Aorta (tissue), 5 donors: ENCODE measurements at regions of chrX and their contacts with region 1.

Region 1: DNA sequence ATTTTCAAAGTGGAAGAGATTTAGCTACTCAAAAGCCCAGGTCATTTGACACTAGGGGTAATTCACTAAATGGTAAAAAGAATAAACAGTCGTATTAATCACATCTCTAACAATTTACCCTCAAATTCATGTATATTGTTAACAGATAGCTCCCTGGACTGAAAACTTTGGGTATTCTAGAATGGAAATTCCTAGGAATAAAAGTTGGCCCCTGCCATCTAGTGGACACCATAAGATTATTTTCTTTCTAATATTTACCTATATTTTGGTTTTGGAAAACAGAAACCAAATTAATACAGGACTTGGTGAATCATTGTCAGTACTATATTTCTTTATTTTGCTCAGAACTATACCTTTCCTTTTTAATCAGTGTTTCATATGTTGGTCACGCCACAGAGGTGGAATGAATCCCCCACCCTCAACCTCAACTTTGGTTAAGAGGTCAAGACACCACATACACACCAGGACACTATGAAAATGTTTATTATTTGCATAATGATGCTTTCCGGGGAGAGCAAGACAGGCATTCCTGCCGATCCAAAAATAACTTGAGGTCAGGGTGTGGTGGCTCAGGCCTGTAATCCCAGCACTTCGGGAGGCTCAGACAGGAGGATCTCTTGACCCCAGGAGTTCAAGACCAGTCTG is 96.2 kb upstream of the APOOL start:
- DNase-seq: no peak
- ATAC-seq: no peak
- H3K4me3 ChIP-seq: no peak overlapping the region
- H3K27ac ChIP-seq: no peak overlapping the region
- H3K4me1 ChIP-seq: no peaks in the 10 kb centered on the region
- H3K27me3 ChIP-seq: no peaks in the 10 kb centered on the region

Region 2: GRCh38 chrX:84729809-84730208 is 177.6 kb before region 1 on chrX:
- intact Hi-C with region 1: loop called (anchors 5 kb)
- DNase-seq: no peak
- ATAC-seq: peak; percentile 84
- H3K4me3 ChIP-seq: no peak overlapping the region
- H3K27ac ChIP-seq: no peak overlapping the region
- H3K4me1 ChIP-seq: no peaks in the 10 kb centered on the region
- H3K27me3 ChIP-seq: no peaks in the 10 kb centered on the region

Region 3: DNA sequence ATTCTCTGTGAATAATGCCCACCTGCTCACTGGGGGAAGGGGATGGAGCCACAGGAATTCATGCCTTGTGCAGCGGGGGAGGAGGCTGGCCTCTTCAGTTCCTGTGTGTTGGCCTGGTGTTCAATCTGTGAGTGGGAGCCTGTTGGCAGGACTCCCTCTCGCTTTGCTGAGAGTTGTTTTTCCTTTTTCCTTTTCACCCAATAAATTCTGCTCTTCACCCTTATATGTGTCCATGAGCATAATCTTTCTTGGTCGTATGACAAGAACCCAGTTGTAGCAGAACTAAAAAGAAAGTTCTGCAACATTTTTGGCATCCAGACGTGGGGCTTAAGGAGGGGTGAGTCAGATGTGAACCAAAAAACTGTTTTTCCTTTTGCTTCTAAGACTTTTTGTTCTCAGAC is 170.0 kb before region 1 on chrX:
- intact Hi-C with region 1: loop called in 1 of 2 experiments (anchors 5 kb)
- DNase-seq: peak in 1 of 2 donors; percentile 51
- ATAC-seq: peak; percentile 72
- H3K4me3 ChIP-seq: no peak overlapping the region
- H3K27ac ChIP-seq: peak overlapping the region in 1 of 2 donors; percentile 41
- H3K4me1 ChIP-seq: peaks cover 0 to 3% of the 10 kb centered on the region in 2 donors
- H3K27me3 ChIP-seq: no peaks in the 10 kb centered on the region